ENCODE measurements at regions of chr5 and their contacts with region 1.

Region 1: DNA sequence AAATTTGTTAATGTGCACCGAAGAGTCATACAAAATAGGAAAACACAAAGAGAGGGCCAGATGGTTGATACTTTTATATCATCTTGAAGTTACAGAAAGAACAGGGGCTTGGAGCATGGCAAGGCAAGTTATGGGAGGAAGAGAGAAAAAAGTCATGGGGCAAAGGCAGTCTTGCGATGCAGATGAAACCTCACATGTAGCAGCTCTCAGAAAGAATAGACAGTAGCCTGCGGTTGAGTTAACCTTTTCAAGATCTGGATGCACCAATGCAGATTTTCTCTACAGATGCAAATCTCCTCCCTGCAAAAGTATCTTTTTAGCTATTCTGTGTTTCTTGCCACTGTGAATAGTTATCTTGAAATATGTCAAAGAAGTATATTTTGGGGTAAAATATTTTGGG is 243.9 kb downstream of the TMEM167A start:
- DNase-seq: no peak
- H3K4me3 ChIP-seq: no peak overlapping the region
- H3K27ac ChIP-seq: no peak overlapping the region
- H3K4me1 ChIP-seq: no peaks in the 10 kb centered on the region
- CTCF ChIP-seq: no peak

Region 2: DNA sequence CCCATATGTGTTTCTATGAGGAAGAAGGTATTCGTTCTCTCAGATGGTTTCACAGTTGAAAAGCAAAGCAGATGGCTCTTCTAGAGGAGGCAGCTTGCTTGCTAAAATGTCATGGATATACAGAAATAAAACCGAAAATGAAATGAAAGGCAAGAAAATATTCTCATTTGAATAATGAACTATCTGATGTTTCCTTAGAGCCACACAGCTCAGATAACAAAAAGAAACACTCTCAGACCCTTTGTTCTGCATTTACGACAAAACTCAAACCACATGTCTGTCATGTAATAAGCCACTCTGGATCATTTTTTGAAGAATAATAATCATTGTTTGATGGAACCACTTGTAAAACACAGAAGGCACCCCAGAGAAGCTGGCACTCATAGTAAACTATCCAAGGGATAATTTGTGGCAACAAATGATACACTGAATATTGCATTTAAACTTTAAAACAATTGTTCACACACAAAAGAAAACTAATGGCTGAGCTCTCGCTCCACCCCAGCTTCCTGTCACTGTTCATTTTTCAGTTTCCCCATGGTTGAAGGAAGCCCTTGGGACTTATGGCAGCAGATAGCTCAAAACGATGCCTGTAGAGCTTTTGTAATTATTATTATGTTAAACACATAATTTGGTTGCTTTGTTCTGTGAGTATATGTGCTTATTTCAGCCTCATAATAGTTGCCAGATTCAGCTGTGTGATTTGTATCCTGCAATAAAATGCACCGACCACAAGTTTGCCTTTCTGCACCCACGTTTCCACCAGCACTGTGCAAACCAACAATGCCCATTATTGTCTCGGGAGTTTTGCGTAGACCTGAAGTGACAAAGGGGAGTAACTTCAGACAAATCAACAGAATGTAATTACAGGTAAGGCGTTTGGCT is 12.1 kb before region 1 on chr5:
- CTCF ChIA-PET with region 1: no interaction called
- POLR2A ChIA-PET with region 1: no interaction called
- intact Hi-C with region 1: loop called (anchors 1 kb)
- DNase-seq: no peak
- H3K4me3 ChIP-seq: no peak overlapping the region
- H3K27ac ChIP-seq: no peak overlapping the region
- H3K4me1 ChIP-seq: no peaks in the 10 kb centered on the region
- CTCF ChIP-seq: no peak

Measured in OCI-LY7 (cell line).